ENCODE measurements at regions of chr1 and their contacts with region 1.

Region 1: GRCh38 chr1:23559136-23559984 is at the start of gene ID3:
- DNase-seq: peak; percentile 98
- H3K4me3 ChIP-seq: peak within 1 kb of the TSS; percentile 69 to 94 (median 89)
- H3K27ac ChIP-seq: peak within 1 kb of the TSS; percentile 99
- H3K4me1 ChIP-seq: peaks cover 56% of the 10 kb centered on the region
- H3K27me3 ChIP-seq: no peaks in the 10 kb centered on the region
- CTCF ChIP-seq: no peak
- POLR2A ChIP-seq: peak; percentile 100
- total RNA-seq, gene ID3: 277 and 310 TPM in 2 replicates

Region 2: DNA sequence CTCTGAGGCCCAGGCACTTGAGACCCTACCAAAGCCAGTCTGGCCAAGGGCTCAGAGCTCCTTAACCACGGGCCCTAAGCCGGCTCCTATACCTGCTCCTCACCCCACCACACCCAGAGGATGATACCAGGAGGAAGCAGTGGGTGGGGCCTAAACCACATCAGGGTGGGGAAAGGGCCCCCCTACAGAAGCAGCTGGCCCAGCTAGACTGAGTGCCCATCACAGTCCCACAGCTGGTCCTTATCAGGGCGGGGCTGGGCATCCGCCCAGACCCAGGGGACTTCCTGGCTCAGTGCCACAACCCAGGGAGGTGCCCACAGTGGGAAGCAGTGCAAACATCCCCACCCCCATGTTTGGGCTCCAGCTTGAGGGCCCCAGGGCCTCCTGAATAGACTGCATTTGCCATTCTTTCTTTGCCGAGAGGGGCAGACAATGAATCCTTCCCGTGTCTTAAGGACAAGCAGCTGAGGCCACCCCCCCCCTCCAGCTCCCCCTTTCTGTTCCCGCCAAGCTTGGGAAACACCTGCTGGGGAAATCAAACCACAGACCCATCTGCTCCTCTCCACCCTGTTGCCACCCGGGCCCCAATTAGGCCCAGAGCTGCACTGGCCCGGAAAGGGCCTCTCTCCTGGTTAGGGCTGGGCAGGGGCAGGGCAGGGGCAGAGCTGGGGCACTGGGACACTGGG is 34.5 kb before region 1 on chr1:
- CTCF ChIA-PET with region 1: no interaction called
- POLR2A ChIA-PET with region 1: no interaction called
- dilution Hi-C with region 1: no loop called
- intact Hi-C with region 1: no loop called
- DNase-seq: no peak
- H3K4me3 ChIP-seq: no peak overlapping the region
- H3K27ac ChIP-seq: no peak overlapping the region
- H3K4me1 ChIP-seq: peaks cover 21% of the 10 kb centered on the region
- H3K27me3 ChIP-seq: no peaks in the 10 kb centered on the region
- CTCF ChIP-seq: no peak
- POLR2A ChIP-seq: no peak

Region 3: DNA sequence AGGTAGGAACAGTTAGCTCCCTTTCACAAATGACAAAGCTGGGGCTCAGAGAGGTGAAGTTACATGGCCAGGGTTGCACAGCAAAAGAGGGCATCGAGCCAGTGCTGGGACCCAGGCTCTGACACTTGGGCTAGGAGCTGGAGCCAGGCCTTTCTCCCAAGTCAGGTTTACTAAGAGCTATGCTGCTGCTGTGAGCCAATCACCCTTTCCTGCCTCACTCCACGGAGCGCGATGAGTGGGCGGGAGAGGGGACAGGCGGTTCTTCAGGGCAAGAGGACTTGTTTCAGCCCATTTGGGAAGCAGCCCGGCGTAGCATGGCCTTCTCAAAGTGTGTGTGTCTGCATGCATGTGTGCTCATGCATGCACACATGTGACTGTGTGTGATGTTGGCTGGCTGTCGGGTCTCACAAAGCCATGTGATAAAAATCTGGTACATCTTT is 10.6 kb before region 1 on chr1:
- CTCF ChIA-PET with region 1: interaction called, 21 read pairs
- POLR2A ChIA-PET with region 1: interaction called, 13 read pairs
- dilution Hi-C with region 1: no loop called
- intact Hi-C with region 1: loop called (anchors 1 kb)
- DNase-seq: no peak
- H3K4me3 ChIP-seq: no peak overlapping the region
- H3K27ac ChIP-seq: peak overlapping the region; percentile 3
- H3K4me1 ChIP-seq: peaks cover 16% of the 10 kb centered on the region
- H3K27me3 ChIP-seq: no peaks in the 10 kb centered on the region
- CTCF ChIP-seq: no peak
- POLR2A ChIP-seq: no peak

Region 4: GRCh38 chr1:23577056-23578004 is 18.0 kb after region 1 on chr1:
- CTCF ChIA-PET with region 1: interaction called, 10 read pairs
- POLR2A ChIA-PET with region 1: interaction called, 9 read pairs
- dilution Hi-C with region 1: no loop called
- intact Hi-C with region 1: loop called (anchors 1 kb)
- DNase-seq: peak; percentile 74
- H3K4me3 ChIP-seq: no peak overlapping the region
- H3K27ac ChIP-seq: peak overlapping the region; percentile 60
- H3K4me1 ChIP-seq: peaks cover 18% of the 10 kb centered on the region
- H3K27me3 ChIP-seq: no peaks in the 10 kb centered on the region
- CTCF ChIP-seq: no peak
- POLR2A ChIP-seq: no peak

Region 5: DNA sequence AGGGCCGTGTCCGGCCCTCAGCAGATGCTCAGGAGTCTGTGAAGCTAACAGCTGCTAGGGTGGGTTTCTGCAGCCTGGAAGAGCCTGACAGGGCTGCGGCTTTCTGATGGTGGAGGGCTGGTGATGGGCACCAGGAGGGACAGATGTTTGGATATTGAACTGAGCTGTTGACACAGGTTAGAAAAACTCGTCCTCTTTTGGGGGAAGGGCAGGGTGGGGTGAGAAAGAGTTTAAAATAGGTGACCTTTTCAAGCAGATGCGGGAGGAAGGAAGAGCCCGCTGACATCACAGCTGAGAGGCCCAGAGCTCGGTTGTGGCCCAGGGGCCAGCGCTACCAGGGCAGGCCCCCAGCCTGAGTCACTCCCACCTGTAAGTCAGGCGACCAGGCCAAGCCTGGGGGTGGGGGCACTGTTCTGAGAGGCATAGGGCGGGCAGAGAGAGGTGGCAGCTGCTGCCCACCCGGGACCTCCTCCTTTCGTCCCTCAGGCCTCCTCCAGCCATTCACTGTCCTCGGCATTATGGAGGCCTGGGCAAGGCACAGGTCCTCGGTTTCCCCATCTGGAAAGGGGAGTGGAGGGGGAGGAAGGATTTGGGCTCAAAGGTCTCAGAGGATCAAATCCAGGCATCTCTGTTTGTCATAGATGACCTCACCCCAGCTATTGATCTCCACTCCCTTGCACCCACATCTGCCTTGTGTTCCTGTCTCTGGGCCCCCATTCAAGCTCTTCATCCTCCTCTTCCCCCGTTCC is 32.3 kb after region 1 on chr1:
- CTCF ChIA-PET with region 1: no interaction called
- POLR2A ChIA-PET with region 1: no interaction called
- dilution Hi-C with region 1: no loop called
- intact Hi-C with region 1: no loop called
- DNase-seq: no peak
- H3K4me3 ChIP-seq: no peak overlapping the region
- H3K27ac ChIP-seq: no peak overlapping the region
- H3K4me1 ChIP-seq: no peaks in the 10 kb centered on the region
- H3K27me3 ChIP-seq: peaks cover 4 to 10% of the 10 kb centered on the region in 2 experiments
- CTCF ChIP-seq: no peak
- POLR2A ChIP-seq: no peak

Region 6: GRCh38 chr1:23691499-23692307 is 132.3 kb after region 1 on chr1 and contains the start of gene RPL11:
- CTCF ChIA-PET with region 1: no interaction called
- POLR2A ChIA-PET with region 1: no interaction called
- dilution Hi-C with region 1: no loop called
- intact Hi-C with region 1: loop called (anchors 2 kb)
- DNase-seq: peak; percentile 96
- H3K4me3 ChIP-seq: peak within 1 kb of the TSS; percentile 70 to 96 (median 88)
- H3K27ac ChIP-seq: peak within 1 kb of the TSS; percentile 77
- H3K4me1 ChIP-seq: peaks cover 30% of the 10 kb centered on the region
- H3K27me3 ChIP-seq: no peaks in the 10 kb centered on the region
- CTCF ChIP-seq: peak; percentile 58 to 81
- POLR2A ChIP-seq: peak; percentile 98
- total RNA-seq, gene RPL11: 1,084 and 1,169 TPM in 2 replicates

Region 7: GRCh38 chr1:23743287-23744052 is 184.1 kb after region 1 on chr1 and contains the start of gene ELOA:
- CTCF ChIA-PET with region 1: no interaction called
- POLR2A ChIA-PET with region 1: no interaction called
- dilution Hi-C with region 1: no loop called
- intact Hi-C with region 1: loop called (anchors 5 kb)
- DNase-seq: peak; percentile 56
- H3K4me3 ChIP-seq: peak within 1 kb of the TSS; percentile 81 to 99 (median 81)
- H3K27ac ChIP-seq: peak within 1 kb of the TSS; percentile 58
- H3K4me1 ChIP-seq: peaks cover 19% of the 10 kb centered on the region
- H3K27me3 ChIP-seq: no peaks in the 10 kb centered on the region
- CTCF ChIP-seq: no peak
- POLR2A ChIP-seq: peak; percentile 92
- total RNA-seq, gene ELOA: 41.0 and 42.6 TPM in 2 replicates

Region 8: DNA sequence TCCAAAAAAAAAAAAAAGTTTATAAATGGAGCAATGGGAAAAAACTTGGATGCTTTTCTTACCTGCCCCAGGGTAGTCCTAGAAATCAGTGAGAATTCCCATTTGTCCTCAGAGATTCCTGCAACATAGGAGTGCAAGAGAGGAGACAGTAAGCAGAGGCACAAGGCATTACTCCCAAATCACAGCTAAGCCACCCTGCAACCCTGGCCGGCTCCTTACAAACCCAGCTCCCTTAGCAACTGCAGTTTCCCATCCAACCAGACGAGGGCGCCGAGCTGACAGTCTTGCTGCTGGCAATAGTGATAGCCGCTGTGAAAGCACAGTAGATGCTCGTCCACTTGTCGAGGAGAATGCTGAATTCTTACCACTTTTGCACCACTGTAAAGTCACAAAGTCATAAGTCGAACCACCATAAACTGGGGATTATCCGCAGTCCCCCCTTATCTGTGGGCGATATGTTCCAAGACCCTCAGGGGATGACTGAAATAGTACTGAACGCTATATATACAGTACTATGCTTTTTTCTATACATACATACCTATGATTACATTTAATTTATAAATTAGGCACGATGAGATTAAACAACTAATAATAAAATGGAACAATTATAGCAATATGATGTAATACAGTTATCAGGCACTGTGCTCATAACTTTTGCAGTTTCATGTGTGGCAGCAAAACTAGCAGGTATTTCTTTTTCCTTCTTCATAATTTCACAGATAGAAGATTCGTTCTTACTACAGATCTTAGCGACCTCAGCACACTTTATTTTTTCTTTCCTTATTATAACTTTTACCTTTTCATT is 212.9 kb after region 1 on chr1:
- CTCF ChIA-PET with region 1: no interaction called
- POLR2A ChIA-PET with region 1: no interaction called
- dilution Hi-C with region 1: no loop called
- intact Hi-C with region 1: no loop called
- DNase-seq: peak; percentile 81
- H3K4me3 ChIP-seq: no peak overlapping the region
- H3K27ac ChIP-seq: no peak overlapping the region
- H3K4me1 ChIP-seq: peaks cover 2% of the 10 kb centered on the region
- H3K27me3 ChIP-seq: no peaks in the 10 kb centered on the region
- CTCF ChIP-seq: peak; percentile 94 to 97
- POLR2A ChIP-seq: no peak

Region 9: DNA sequence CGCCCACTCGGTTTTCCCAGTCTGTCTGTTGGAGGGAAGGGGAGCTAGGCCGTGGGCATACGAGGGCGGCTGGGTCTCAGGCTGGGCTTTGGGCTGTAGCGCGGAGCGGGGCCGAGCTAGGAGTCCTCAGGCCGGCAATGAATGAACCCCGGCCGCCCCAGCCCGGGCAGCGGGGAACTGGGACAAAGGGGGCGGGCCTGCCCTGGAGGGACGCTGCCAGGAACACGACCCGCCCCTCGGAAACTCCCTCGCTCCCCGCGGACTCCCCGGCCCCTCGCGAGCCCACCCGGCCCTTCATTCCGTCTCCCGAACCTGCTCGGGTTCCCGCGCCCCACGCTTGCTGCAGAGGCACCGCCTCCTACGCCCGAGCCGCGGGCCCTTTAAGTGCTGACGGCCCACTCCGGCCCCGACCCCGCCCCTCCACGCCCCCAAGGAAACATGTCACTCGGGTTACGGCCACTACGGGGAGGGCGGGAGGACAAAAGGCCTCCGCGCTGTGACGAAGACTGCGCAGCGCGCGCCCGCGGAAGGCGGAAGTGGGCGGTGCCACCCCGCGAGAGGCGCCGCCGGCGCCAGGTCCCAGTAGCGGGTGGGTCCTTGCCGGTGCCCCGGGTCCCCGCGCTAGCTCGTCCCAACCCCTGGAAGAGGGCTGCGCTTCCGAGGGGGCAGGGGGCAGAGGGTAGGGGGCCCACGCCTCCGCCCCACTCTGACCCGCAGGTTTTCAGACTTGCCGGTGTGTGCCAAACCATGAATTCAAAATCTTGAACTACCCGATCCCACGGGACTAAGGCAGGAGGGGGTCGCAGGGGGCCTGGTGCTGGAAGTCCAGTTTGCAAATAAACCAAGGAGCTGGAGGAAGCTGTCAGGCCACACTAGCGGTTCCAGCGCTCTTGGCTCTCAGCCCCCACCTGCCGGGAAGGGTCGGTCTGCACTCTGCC is 241.3 kb after region 1 on chr1 and contains the start of gene GALE:
- CTCF ChIA-PET with region 1: no interaction called
- POLR2A ChIA-PET with region 1: no interaction called
- dilution Hi-C with region 1: no loop called
- intact Hi-C with region 1: loop called (anchors 5 kb)
- DNase-seq: peak; percentile 95
- H3K4me3 ChIP-seq: peak within 1 kb of the TSS; percentile 45 to 83 (median 73)
- H3K27ac ChIP-seq: peak within 1 kb of the TSS; percentile 62
- H3K4me1 ChIP-seq: peaks cover 15% of the 10 kb centered on the region
- H3K27me3 ChIP-seq: no peaks in the 10 kb centered on the region
- CTCF ChIP-seq: no peak
- POLR2A ChIP-seq: peak; percentile 61
- total RNA-seq, gene GALE: 39.2 and 42.9 TPM in 2 replicates

Measured in endothelial cell of umbilical vein (primary cell).